Heart right ventricle (tissue), 16 donors: ENCODE measurements at regions of chr21 and their contacts with region 1.

Region 1: DNA sequence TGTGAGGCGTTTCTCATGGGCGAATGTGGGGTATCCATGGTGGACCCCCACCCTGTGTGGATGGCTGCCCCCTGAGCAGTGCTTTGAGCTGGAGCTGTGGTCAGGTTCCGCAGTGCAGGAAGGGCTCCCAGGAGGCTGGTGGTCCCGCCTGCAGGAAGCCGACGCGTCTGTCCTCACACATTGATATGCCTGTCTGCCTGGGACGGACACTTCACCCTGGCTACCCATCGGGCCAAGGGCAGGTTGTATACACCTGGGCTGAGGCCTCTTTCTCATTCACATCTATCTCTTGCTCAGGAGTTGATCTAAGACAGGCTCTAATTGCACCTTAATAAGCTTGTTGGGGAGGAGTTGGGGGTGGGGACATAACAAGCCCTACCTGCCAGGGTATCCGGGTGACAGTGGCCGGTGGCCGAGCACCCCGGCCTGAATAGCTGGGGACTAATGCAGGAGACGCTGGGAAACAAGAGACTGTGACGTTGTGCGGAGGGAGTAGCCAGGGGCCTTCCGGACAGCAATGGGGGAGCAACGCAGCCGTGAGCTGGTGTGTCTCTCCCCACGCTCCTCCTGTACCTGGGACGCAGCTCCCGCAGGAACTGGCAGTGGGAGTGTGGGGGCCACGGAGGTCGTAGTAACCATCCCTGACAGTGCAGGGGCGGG is 21.7 kb downstream of the PDXK start:
- DNase-seq: no peak
- ATAC-seq: peak in 5 of 8 donors; percentile 13 to 68 (median 32)
- H3K4me3 ChIP-seq: peak overlapping the region in 1 of 10 donors; percentile 18
- H3K27ac ChIP-seq: peak overlapping the region in 1 of 10 donors; percentile 44
- H3K4me1 ChIP-seq: peaks cover 0 to 5% (median 0%) of the 10 kb centered on the region in 9 donors
- H3K27me3 ChIP-seq: no peaks in the 10 kb centered on the region
- CTCF ChIP-seq: no peak

Region 2: DNA sequence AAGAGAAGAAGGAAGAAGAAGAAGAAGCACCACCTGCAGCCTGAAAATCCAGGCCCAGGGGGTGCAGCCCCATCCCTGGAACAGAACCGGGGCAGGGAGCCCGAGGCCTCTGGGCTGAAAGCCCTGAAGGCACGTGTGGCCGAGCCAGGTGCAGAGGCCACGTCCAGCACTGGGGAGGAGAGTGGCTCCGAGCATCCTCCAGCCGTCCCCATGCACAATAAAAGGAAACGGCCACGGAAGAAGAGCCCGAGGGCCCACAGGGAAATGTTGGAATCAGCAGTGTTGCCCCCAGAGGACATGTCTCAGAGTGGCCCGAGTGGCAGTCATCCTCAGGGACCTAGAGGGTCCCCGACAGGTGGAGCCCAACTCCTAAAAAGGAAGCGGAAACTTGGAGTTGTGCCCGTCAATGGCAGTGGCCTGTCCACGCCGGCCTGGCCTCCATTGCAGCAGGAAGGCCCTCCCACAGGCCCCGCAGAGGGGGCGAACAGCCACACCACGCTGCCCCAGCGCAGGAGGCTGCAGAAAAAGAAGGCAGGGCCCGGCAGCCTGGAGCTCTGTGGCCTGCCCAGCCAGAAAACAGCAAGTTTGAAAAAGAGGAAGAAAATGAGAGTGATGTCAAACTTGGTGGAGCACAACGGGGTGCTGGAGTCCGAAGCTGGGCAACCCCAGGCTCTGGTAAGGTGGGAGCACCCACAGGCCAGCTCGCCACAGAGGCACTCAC is 52.9 kb before region 1 on chr21:
- intact Hi-C with region 1: loop called in 1 of 10 experiments (anchors 10 kb)
- DNase-seq: peak in 1 of 2 donors; percentile 22
- ATAC-seq: peak in 6 of 8 donors; percentile 20 to 47 (median 43)
- H3K4me3 ChIP-seq: no peak overlapping the region
- H3K27ac ChIP-seq: peak overlapping the region in 4 of 10 donors; percentile 1 to 52 (median 26)
- H3K4me1 ChIP-seq: peaks cover 0 to 21% (median 0%) of the 10 kb centered on the region in 9 donors
- H3K27me3 ChIP-seq: no peaks in the 10 kb centered on the region
- CTCF ChIP-seq: no peak

Region 3: DNA sequence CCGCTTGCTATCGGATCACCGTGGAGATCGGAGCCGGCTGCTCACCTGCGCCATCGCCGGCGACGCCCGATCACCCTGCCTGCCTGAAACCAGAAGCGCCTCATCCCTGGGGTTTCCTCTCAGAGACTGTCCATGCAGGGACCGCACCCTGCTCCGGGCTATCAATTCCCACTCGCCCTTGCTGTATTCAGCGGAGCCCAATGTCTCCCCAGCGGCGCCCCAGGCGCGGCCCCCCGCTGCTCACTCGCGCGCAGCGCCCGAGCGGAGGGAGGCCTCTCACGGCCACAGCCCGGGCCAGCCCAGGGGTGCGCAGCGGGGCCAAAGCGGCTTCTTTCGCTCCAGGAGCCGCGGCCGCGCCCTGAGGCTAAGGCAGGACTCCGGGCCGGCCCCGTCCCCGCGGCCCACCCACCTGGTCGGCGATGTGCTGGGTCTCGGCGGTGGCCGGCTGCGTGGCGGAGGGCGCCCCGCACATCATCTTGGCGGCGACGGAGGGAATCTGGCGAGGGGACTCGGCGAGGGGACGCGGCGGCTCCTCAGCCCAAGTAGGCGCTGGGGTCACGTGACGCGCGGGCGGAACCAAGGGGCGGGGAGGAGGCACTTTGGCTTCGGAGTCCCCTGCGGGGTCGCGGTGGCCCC is 35.3 kb after region 1 on chr21 and contains the start of gene CSTB:
- intact Hi-C with region 1: loop called in 1 of 10 experiments (anchors 5 kb)
- DNase-seq: peak; percentile 84 to 86
- ATAC-seq: peak; percentile 63 to 90 (median 84)
- H3K4me3 ChIP-seq: peak within 1 kb of the TSS; percentile 69 to 100 (median 94)
- H3K27ac ChIP-seq: peak within 1 kb of the TSS; percentile 77 to 98 (median 93)
- H3K4me1 ChIP-seq: peaks cover 0 to 50% (median 18%) of the 10 kb centered on the region in 9 donors
- H3K27me3 ChIP-seq: no peaks in the 10 kb centered on the region
- CTCF ChIP-seq: no peak
- total RNA-seq, gene CSTB: 33.0 to 50.2 (median 39.2) TPM

Region 4: GRCh38 chr21:43789276-43790009 is 48.8 kb after region 1 on chr21 and contains the start of gene RRP1:
- intact Hi-C with region 1: loop called in 1 of 10 experiments (anchors 5 kb)
- DNase-seq: peak; percentile 84 to 94
- ATAC-seq: peak; percentile 95 to 98 (median 95)
- H3K4me3 ChIP-seq: peak within 1 kb of the TSS; percentile 73 to 97 (median 92)
- H3K27ac ChIP-seq: peak within 1 kb of the TSS; percentile 53 to 95 (median 86)
- H3K4me1 ChIP-seq: peaks cover 6 to 22% (median 19%) of the 10 kb centered on the region in 9 donors
- H3K27me3 ChIP-seq: no peaks in the 10 kb centered on the region
- CTCF ChIP-seq: peak in 8 of 9 donors; percentile 97 to 100 (median 100)
- total RNA-seq, gene RRP1: 6.3 to 13.9 (median 9.3) TPM

Region 5: DNA sequence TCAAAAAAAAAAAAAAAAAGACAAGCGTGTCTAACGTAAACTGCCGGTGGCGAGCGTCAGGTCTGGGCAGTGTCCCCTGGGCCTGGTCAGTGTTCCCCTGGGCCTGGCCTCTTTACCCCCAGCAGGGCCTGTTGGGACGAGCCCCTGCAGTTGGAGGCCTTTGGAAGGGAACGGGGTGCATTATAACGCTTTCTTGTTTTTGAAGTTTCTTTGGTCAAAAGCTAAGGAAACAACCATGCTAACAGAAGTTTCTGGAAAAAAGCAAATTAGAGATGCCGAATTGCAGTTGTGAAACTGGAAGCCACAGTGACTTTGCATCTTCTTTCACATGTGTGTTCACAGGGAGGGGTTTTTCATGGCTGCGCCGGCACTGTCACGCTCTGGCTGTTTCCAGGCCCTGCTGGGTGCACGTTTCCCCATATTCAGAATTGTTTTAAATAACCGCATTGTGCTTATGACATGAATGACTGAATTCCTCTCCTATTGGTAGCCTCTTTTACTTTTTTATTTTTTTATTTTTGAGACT is 64.7 kb after region 1 on chr21:
- intact Hi-C with region 1: loop called in 1 of 10 experiments (anchors 10 kb)
- DNase-seq: no peak
- ATAC-seq: no peak
- H3K4me3 ChIP-seq: no peak overlapping the region
- H3K27ac ChIP-seq: peak overlapping the region in 1 of 10 donors; percentile 66
- H3K4me1 ChIP-seq: peaks cover 0 to 19% (median 0%) of the 10 kb centered on the region in 9 donors
- H3K27me3 ChIP-seq: no peaks in the 10 kb centered on the region
- CTCF ChIP-seq: no peak